Activated CD8-positive, alpha-beta T cell treated with anti-CD3 and anti-CD28 coated beads, Interleukin-2, amount 10 ng/mL, durations not matched to agents 7 days and 5 days (primary cell): ENCODE measurements at regions of chrX and their contacts with region 1.

Region 1: GRCh38 chrX:104136241-104137019 is 20.4 kb downstream of the SLC25A53 start:
- DNase-seq: peak; percentile 64
- ATAC-seq: peak; percentile 84
- H3K4me3 Mint-ChIP-seq: no peak overlapping the region
- H3K27ac Mint-ChIP-seq: no peak overlapping the region
- H3K4me1 Mint-ChIP-seq: peaks cover 26% of the 10 kb centered on the region
- H3K27me3 Mint-ChIP-seq: no peaks in the 10 kb centered on the region

Region 2: GRCh38 chrX:104098151-104098808 is 38.1 kb before region 1 on chrX:
- CTCF ChIA-PET with region 1: interaction called, 40 read pairs
- POLR2A ChIA-PET with region 1: no interaction called
- DNase-seq: peak; percentile 63
- ATAC-seq: no peak
- H3K4me3 Mint-ChIP-seq: no peak overlapping the region
- H3K27ac Mint-ChIP-seq: no peak overlapping the region
- H3K4me1 Mint-ChIP-seq: peaks cover 2% of the 10 kb centered on the region
- H3K27me3 Mint-ChIP-seq: no peaks in the 10 kb centered on the region

Region 3: GRCh38 chrX:104113222-104113965 is 23.0 kb before region 1 on chrX:
- CTCF ChIA-PET with region 1: interaction called, 23 read pairs
- POLR2A ChIA-PET with region 1: interaction called, 6 read pairs
- DNase-seq: peak; percentile 75
- ATAC-seq: peak; percentile 62
- H3K4me3 Mint-ChIP-seq: peak overlapping the region; percentile 81
- H3K27ac Mint-ChIP-seq: peak overlapping the region; percentile 87
- H3K4me1 Mint-ChIP-seq: peaks cover 51% of the 10 kb centered on the region
- H3K27me3 Mint-ChIP-seq: no peaks in the 10 kb centered on the region

Region 4: GRCh38 chrX:104122829-104123228 is 13.6 kb before region 1 on chrX:
- CTCF ChIA-PET with region 1: interaction called, 16 read pairs
- POLR2A ChIA-PET with region 1: no interaction called
- DNase-seq: peak; percentile 20
- ATAC-seq: peak; percentile 92
- H3K4me3 Mint-ChIP-seq: peak overlapping the region; percentile 46
- H3K27ac Mint-ChIP-seq: peak overlapping the region; percentile 91
- H3K4me1 Mint-ChIP-seq: peaks cover 28% of the 10 kb centered on the region
- H3K27me3 Mint-ChIP-seq: no peaks in the 10 kb centered on the region